ENCODE measurements at regions of chr6 and their contacts with region 1.

Region 1: DNA sequence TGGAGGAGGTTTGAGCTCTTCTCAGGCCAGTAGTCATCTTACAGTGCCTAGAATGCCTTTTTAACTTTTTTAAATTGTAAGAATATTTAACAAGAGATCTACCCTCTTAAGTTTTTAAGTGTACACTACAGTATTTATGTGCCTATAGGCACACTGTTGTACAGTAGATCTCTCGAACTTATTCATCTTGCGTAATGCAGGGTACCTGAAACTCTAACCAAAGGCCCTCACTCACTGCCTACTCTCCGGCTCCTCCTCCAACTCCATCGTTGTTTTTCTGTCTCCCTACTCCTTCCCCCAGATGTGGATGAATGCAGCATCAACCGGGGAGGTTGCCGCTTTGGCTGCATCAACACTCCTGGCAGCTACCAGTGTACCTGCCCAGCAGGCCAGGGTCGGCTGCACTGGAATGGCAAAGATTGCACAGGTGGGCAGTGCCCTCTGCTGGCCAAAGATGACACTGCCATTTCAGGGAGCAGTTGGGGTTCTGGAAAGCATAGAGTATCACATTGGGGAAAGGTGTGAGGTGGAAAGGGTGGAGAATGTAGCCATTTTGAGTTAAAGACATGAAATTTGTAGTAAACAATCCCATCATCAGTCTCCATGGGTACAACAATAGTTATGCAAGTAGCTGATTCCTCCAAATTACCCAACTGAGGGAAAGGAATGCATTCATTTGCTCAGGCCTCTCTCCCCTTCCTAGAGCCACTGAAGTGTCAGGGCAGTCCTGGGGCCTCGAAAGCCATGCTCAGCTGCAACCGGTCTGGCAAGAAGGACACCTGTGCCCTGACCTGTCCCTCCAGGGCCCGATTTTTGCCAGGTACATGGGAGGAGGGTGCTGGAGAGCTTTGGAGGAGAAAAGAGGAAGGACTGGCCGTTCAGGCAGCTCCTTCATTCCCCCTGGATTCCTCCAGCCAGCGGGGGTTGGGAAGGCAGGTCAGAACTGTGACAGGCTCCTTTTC is 18.4 kb upstream of the ZNF76 start:
- DNase-seq: peak; percentile 85
- H3K27ac ChIP-seq: no peak overlapping the region
- CTCF ChIP-seq: peak; percentile 94

Region 2: GRCh38 chr6:35139908-35140655 is 101.0 kb before region 1 on chr6:
- CTCF ChIA-PET with region 1: interaction called, 57 read pairs
- POLR2A ChIA-PET with region 1: no interaction called
- DNase-seq: peak; percentile 47
- H3K27ac ChIP-seq: no peak overlapping the region
- CTCF ChIP-seq: peak; percentile 82

Region 3: GRCh38 chr6:35146453-35146852 is 94.7 kb before region 1 on chr6:
- CTCF ChIA-PET with region 1: interaction called, 57 read pairs
- POLR2A ChIA-PET with region 1: no interaction called
- DNase-seq: peak; percentile 45
- H3K27ac ChIP-seq: no peak overlapping the region
- CTCF ChIP-seq: peak; percentile 20

Region 4: GRCh38 chr6:35202066-35202546 is 39.0 kb before region 1 on chr6:
- CTCF ChIA-PET with region 1: interaction called, 37 read pairs
- POLR2A ChIA-PET with region 1: no interaction called
- DNase-seq: no peak
- H3K27ac ChIP-seq: no peak overlapping the region
- CTCF ChIP-seq: no peak

Region 5: GRCh38 chr6:35230950-35231349 is 10.2 kb before region 1 on chr6:
- CTCF ChIA-PET with region 1: interaction called, 36 read pairs
- POLR2A ChIA-PET with region 1: no interaction called
- DNase-seq: no peak
- H3K27ac ChIP-seq: no peak overlapping the region
- CTCF ChIP-seq: no peak